ENCODE measurements at regions of chr1 and their contacts with region 1.

Region 1: GRCh38 chr1:19811206-19811851 is 3.8 kb downstream of the RNF186 start:
- DNase-seq: peak; percentile 38
- ATAC-seq: peak in 1 of 2 donors; percentile 57

Region 2: DNA sequence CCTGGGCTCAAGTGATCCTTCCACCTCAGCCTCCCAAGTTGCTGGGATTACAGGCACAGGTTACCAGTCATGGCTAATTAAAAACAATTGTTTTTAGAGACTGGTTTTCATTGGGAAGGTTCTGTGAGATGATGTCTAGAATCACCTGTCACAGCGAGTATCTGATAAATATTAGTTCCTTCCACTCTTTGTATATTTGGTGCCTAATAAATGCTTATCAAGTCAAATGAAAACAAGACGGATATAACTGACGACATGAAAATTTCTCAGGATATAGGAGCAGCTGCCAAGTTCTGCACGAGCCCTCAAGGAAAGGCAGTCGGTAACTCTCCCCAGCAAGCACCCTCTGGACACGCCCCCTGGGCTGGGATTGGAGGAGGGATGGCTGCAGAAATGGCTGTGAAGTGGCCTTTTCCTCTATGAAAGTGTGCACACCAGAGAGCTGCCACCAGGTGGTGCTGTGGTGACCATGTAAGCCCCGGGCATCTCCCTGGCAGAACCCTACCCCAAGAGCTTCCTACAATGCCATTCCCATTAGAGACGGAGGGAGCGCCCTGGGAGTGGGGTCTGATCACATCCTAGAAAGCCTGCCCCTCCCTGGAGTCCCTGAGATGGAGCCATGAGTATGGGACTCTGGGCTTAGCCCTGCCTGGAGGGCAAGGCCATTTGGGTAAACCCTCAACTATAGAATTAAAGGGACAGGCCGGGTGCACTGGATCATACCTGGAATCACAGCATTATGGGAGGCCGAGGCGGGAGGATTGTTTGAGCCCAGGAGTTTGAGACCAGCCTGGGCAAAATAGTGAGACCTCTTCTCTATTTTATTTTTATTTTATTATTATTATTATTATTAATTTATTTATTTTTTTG is 95.8 kb before region 1 on chr1:
- intact Hi-C with region 1: loop called in 1 of 2 experiments (anchors 10 kb)
- DNase-seq: peak; percentile 90
- ATAC-seq: peak; percentile 95 to 97

Measured in left cardiac atrium (tissue), 4 donors.